H1 (cell line): ENCODE measurements at regions of chr1 and their contacts with region 1.

Region 1: DNA sequence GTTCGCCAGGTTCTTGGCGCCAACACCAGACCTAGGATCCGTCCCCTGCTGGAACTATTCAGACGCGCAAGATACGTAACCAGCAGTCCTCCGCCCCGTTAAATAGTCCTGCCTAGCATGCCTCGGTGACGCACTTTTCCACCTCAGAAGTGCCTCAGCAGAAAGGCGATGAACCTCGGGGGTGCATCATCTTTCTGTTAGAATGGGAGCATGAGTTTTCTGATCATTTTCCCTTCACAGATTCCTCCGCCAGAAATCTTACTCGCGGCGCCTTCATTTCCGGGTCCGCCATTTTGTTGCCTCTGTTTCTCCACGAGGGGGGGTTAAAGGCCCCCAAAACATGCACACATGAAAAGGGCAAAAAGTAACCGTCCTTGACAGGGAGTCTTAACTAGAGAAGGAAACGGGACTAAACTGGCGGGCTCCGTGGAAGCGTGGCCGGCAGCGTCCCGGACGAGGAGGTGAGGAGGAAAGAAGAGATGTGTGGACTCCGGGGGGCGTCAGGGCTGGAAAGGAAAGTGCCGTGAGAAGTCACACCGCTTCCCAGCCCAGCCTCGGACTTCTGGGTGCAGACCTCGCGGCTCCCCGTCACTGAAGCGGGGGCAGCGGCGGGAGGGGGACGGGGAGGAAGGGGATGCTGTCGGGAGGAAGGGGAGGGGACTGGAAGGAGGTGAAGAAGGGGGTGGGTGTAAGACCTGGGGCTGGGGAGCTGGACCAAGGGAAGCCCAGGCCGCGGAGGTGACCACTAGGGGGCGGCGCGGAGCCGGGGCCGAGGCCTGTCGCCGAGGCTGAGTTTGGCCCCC is at the start of gene GABPB2:
- DNase-seq: peak; percentile 77 to 98
- H3K4me3 ChIP-seq: peak within 1 kb of the TSS; percentile 83 to 94 (median 92)
- H3K27ac ChIP-seq: peak within 1 kb of the TSS; percentile 98
- H3K4me1 ChIP-seq: peaks cover 0 to 4% (median under 1%) of the 10 kb centered on the region in 4 experiments; a peak in 1 of 7 replicates
- H3K27me3 ChIP-seq: no peaks in the 10 kb centered on the region
- CTCF ChIP-seq: peak; percentile 80 to 90 (median 83)
- EP300 ChIP-seq: 0 out of 3 replicates have a peak, but pooled peaks of 1 of the 2 experiments have one; percentile 19
- POLR2A ChIP-seq: peak; percentile 74 to 78; a peak in 1 of 3 replicates
- RAD21 ChIP-seq: peak; percentile 61 to 63
- total RNA-seq, gene GABPB2: 1.9 and 2.4 TPM in 2 replicates

Region 2: GRCh38 chr1:150931773-150932172 is 138.9 kb before region 1 on chr1:
- CTCF ChIA-PET with region 1: no interaction called
- POLR2A ChIA-PET with region 1: no interaction called
- DNase-seq: no peak
- H3K4me3 ChIP-seq: no peak overlapping the region
- H3K27ac ChIP-seq: no peak overlapping the region
- H3K4me1 ChIP-seq: no peaks in the 10 kb centered on the region
- H3K27me3 ChIP-seq: no peaks in the 10 kb centered on the region
- CTCF ChIP-seq: no peak
- EP300 ChIP-seq: no peak
- POLR2A ChIP-seq: no peak
- RAD21 ChIP-seq: no peak

Region 3: GRCh38 chr1:151085953-151086559 is 15.4 kb after region 1 on chr1:
- CTCF ChIA-PET with region 1: interaction called, 19 read pairs
- POLR2A ChIA-PET with region 1: interaction called, 4 read pairs
- DNase-seq: no peak
- H3K4me3 ChIP-seq: no peak overlapping the region
- H3K27ac ChIP-seq: no peak overlapping the region
- H3K4me1 ChIP-seq: no peaks in the 10 kb centered on the region; a peak in 2 of 7 replicates
- H3K27me3 ChIP-seq: no peaks in the 10 kb centered on the region
- CTCF ChIP-seq: no peak
- EP300 ChIP-seq: no peak
- POLR2A ChIP-seq: no peak
- RAD21 ChIP-seq: no peak